ENCODE measurements at regions of chr1 and their contacts with region 1.

Region 1: GRCh38 chr1:98749152-98749756 is 87.7 kb downstream of the SNX7 start:
- DNase-seq: no peak
- H3K4me3 ChIP-seq: no peak overlapping the region
- CTCF ChIP-seq: peak; percentile 30

Region 2: GRCh38 chr1:98637316-98637715 is 111.9 kb before region 1 on chr1:
- CTCF ChIA-PET with region 1: no interaction called
- POLR2A ChIA-PET with region 1: no interaction called
- DNase-seq: no peak
- H3K4me3 ChIP-seq: no peak overlapping the region
- CTCF ChIP-seq: no peak

Region 3: DNA sequence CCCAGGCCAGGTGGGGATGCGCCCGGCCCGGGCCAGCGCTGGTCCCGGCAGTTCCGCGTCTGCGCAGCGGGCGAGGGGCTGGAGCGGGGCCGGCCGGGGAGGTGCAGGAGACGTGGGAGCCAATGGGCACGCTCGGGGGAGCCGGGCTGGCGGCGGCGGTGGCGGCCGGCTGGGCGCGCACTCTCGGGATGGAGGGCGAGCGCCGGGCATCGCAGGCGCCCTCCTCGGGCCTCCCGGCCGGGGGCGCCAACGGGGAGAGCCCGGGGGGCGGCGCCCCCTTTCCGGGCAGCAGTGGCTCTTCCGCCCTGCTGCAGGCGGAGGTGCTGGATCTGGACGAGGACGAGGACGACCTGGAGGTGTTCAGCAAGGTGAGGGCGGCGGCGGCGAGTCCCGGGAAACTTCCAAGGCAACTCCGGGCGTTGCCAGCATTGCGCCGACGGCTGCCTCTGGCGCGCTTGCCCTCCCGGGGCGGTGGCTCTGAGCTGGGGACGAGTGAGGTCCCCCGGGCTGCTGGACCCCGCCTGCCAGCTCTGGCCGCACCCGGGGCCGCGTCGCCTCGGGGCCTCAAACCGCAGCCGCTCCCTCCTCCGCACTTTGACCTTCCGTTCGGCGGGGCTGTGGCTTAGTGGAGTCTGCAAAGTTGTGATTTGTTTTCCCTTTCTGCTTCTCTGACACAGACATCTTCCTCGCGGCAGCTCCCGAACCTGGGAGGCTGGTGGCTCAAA is 87.5 kb before region 1 on chr1 and contains the start of gene SNX7:
- CTCF ChIA-PET with region 1: interaction called, 12 read pairs
- POLR2A ChIA-PET with region 1: no interaction called
- DNase-seq: no peak
- H3K4me3 ChIP-seq: peak within 1 kb of the TSS; percentile 80
- CTCF ChIP-seq: peak; percentile 26

Region 4: DNA sequence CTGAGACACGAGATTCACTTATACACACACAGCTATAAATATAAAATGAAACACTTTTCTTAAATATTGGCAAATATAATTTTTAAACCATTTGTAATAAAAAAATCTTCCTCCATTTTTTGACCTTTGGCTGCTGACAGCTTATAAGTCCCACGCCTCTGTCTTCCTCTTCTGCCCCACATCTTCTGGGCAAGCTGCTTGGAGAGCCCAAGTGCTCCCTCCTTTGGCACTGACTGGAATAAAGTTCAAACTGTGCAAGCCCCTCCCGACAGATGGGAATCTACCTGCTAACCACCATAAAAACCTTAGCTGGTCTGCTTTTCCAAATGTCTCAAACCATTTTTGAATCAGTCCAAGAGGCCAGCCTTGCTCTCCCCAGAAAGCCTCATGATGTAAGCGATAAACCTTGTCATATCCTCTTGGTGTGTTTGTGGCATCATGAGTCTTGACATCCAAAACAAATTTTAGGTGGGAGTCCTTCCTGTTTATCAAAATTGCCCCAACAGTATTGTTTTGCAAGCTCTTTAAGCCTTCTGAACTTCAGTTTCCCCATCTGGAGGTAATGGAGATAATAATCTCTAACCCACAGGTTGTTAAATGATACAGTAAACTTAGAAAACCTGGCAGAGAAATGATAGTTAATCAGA is 12.1 kb after region 1 on chr1:
- CTCF ChIA-PET with region 1: interaction called, 10 read pairs
- POLR2A ChIA-PET with region 1: no interaction called
- DNase-seq: no peak
- H3K4me3 ChIP-seq: no peak overlapping the region
- CTCF ChIP-seq: no peak

Region 5: GRCh38 chr1:99707535-99708142 is 958.4 kb after region 1 on chr1:
- CTCF ChIA-PET with region 1: interaction called, 10 read pairs
- POLR2A ChIA-PET with region 1: no interaction called
- DNase-seq: no peak
- H3K4me3 ChIP-seq: no peak overlapping the region
- CTCF ChIP-seq: peak; percentile 77

Region 6: DNA sequence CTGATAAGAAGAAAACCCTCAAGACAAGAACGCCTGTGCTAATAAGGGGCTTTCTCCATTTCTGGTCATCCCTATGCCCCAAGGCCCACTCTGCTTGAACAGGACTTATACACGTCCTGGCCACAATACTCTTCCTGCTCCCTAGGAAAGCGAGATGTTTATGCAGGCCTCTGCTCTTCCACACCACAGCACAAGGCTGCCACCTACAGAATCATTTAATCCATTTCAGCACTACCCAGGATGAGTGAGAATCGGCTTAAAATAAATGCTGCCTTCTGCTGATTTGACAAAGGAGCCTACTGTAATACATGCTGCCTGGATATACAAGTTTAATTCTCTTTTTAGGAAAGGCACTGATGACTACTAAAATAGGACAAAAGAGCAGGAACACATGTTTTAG is 987.8 kb after region 1 on chr1:
- CTCF ChIA-PET with region 1: interaction called, 12 read pairs
- POLR2A ChIA-PET with region 1: no interaction called
- DNase-seq: peak; percentile 26
- H3K4me3 ChIP-seq: no peak overlapping the region
- CTCF ChIP-seq: peak; percentile 43

Measured in AG04449 (cell line).